Caco-2 (cell line): ENCODE measurements at regions of chr13 and their contacts with region 1.

Region 1: DNA sequence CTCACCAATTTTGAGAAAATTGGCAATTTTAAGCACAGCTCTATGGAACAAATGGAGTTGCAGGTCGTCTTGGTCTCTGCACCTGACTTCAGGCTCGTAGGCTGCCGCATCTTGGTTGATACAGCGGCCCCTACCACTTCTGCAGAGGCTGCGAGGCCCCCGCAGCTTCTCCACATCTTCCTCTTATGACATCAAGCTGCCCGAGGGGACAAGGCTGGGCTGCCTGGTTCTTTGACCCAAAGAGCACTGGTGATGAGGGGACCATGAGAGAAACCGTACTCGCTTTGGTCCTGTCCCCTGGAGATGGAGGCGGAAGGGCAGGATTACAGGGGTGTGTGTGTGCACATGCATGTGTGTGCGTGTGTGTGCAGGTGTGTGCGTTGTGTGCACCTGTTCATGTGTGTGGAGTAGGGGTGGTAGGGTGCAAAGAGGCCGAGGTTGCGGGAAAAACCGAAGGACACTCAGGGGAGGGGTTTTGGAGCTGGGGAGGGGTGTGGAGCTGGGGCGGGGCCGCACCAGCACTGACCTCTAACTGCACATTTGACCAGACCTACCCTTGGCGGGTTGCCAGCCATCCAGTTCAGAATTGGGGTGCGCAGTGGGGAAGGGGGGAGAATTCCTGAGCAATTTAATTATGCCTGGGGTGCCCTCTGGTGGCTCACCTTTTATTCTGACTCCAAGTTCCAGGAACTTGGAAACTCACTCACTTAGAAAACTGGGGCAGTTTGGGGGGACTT is 65.1 kb upstream of the ARHGEF7 start:
- DNase-seq: peak in 1 of 2 experiments; percentile 35
- H3K4me3 ChIP-seq: no peak overlapping the region
- H3K4me3 Mint-ChIP-seq: no peak overlapping the region
- H3K27ac Mint-ChIP-seq: no peak overlapping the region
- H3K4me1 ChIP-seq: no peaks in the 10 kb centered on the region
- H3K4me1 Mint-ChIP-seq: no peaks in the 10 kb centered on the region
- H3K27me3 ChIP-seq: no peaks in the 10 kb centered on the region; the same call in 1 of the 2 replicates
- H3K27me3 Mint-ChIP-seq: peaks cover 10% of the 10 kb centered on the region
- CTCF ChIP-seq: peak; percentile 53 to 56

Region 2: DNA sequence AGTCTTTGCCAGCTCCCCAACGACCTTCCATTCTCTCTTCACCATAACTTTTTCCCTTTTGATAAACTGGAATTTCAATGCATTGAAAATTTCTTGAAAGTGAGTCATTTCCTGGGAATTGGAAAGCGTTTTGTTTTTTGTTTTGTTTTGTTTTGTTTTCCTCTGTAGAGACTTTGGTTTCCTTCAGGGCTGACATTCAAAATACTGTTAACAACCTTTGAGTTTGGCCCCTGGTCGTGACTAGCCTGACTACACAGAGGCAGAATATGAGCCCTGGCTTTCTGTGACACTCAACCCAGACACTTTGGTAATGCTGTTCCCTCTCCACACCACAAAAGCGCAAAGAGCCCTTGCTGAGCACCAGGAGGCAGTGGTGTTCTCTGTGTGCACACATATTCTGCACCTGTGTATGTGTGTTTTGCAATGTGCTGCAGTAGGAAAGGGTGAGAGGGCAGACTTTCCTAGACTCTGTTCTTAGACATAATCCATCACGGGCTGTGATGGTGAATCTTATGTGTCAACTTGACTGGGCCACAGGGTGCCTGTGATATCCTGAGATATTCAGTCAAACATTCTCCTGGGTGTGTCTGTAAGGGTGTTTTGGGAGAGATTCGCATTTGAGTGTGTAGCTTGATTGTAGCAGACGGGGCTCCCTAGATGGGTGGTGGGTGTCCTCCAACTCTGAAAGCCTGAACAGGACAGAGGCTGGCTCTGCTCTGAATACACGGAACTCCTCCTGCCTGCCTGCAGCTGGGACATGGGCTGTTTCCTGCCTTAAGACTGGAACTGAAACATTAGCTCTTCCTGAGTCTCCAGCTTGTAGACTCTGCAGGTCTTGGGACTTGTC is 105.6 kb before region 1 on chr13:
- CTCF ChIA-PET with region 1: interaction called, 3 read pairs
- POLR2A ChIA-PET with region 1: no interaction called
- intact Hi-C with region 1: loop called (anchors 1 kb)
- DNase-seq: peak; percentile 59 to 66
- H3K4me3 ChIP-seq: no peak overlapping the region
- H3K4me3 Mint-ChIP-seq: no peak overlapping the region
- H3K27ac Mint-ChIP-seq: no peak overlapping the region
- H3K4me1 ChIP-seq: no peaks in the 10 kb centered on the region
- H3K4me1 Mint-ChIP-seq: no peaks in the 10 kb centered on the region
- H3K27me3 ChIP-seq: no peaks in the 10 kb centered on the region; the same call in 1 of the 2 replicates
- H3K27me3 Mint-ChIP-seq: no peaks in the 10 kb centered on the region
- CTCF ChIP-seq: peak; percentile 73 to 85